ENCODE measurements at regions of chr16 and their contacts with region 1.

Region 1: DNA sequence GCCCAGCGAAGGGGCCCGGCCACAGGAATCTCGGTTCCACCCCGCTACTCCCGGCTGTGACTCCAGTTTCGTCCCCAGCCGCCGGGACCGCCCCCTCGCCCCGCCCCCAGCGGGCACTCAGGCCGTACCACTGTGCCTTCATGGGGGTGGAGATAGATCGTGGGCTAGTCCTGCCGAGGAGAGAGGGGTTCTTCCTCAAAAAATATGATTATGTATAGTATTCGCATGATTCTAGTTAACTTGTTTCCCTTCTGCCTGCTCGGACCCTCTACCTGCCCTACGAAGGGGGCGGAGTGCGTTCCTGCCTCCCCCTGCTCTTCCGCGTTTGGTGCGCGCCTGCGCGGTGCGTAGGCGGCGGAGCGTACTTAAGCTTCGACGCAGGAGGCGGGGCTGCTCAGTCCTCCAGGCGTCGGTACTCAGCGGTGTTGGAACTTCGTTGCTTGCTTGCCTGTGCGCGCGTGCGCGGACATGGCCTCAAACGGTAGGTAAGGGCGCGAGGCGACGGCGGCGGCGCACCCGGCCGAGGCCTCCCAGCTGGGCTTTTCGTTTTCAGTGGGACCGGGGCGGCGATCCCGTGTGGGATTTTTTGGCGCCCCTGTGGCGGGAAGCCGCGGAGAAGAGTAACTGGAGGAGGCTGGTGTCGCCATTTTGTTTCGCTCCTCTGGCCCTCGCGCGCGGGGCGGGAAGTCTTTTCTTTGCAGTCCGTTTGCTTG is at the start of gene FUS:
- DNase-seq: peak; percentile 78 to 98 (median 89)
- ATAC-seq: peak; percentile 64 to 79 (median 69)
- H3K4me3 ChIP-seq: peak within 1 kb of the TSS; percentile 90 to 92
- H3K4me3 Mint-ChIP-seq: peak within 1 kb of the TSS; percentile 97 to 98 (median 98)
- H3K27ac ChIP-seq: peak within 1 kb of the TSS; percentile 89
- H3K27ac Mint-ChIP-seq: peak within 1 kb of the TSS; percentile 99
- H3K4me1 ChIP-seq: peaks cover 48 to 70% of the 10 kb centered on the region in 2 experiments
- H3K4me1 Mint-ChIP-seq: peaks cover 58 to 70% (median 65%) of the 10 kb centered on the region in 3 donors
- H3K27me3 ChIP-seq: no peaks in the 10 kb centered on the region
- H3K27me3 Mint-ChIP-seq: peaks cover 0 to 2% of the 10 kb centered on the region in 2 donors
- total RNA-seq, gene FUS: 410 to 963 (median 434) TPM

Region 2: DNA sequence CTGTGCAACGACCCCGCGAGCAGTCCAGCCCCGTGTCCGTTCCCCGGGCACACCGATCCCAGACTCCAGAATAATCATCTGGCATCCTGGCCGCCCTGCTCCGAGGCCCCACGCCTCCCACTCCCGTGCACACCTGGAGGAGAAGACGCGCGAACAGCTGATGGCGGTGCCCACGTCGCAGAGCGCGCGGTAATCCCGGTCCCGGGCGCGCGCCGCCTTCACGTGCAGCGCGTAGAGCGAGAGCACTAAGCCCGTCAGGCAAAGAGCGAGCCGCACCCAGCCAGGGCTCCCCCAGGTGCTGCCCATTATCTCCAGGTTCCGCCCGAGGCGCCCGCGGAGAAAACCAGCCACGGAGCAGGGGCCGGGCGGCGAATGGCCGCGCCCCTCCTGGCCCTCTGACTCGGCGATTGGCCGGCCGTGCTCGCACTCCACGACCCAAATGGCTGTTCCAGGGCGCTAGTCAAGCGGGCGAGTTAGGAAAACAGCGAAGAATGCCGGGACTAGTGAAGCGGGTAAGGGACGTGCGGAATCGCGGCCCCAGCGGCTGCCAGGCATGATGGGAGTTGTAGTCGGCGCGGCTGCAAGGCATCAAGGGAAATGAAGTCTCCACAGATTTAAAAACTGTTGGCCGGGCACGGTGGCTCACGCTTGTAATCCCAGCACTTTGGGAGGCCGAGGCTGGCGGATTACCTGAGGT is 85.3 kb before region 1 on chr16 and contains the start of gene VKORC1:
- CTCF ChIA-PET with region 1: no interaction called
- POLR2A ChIA-PET with region 1: interaction called in 1 of 2 experiments, 10 read pairs
- DNase-seq: peak; percentile 66 to 92 (median 78)
- ATAC-seq: peak; percentile 90 to 93 (median 92)
- H3K4me3 ChIP-seq: peak within 1 kb of the TSS; percentile 86
- H3K4me3 Mint-ChIP-seq: peak within 1 kb of the TSS; percentile 91 to 99 (median 92)
- H3K27ac ChIP-seq: peak within 1 kb of the TSS; percentile 75
- H3K27ac Mint-ChIP-seq: peak within 1 kb of the TSS; percentile 86 to 94
- H3K4me1 ChIP-seq: peaks cover 5 to 30% of the 10 kb centered on the region in 2 experiments
- H3K4me1 Mint-ChIP-seq: peaks cover 22 to 32% (median 31%) of the 10 kb centered on the region in 3 donors
- H3K27me3 ChIP-seq: no peaks in the 10 kb centered on the region
- H3K27me3 Mint-ChIP-seq: no peaks in the 10 kb centered on the region
- total RNA-seq, gene VKORC1: 31.8 to 66.4 (median 56.9) TPM

Region 3: DNA sequence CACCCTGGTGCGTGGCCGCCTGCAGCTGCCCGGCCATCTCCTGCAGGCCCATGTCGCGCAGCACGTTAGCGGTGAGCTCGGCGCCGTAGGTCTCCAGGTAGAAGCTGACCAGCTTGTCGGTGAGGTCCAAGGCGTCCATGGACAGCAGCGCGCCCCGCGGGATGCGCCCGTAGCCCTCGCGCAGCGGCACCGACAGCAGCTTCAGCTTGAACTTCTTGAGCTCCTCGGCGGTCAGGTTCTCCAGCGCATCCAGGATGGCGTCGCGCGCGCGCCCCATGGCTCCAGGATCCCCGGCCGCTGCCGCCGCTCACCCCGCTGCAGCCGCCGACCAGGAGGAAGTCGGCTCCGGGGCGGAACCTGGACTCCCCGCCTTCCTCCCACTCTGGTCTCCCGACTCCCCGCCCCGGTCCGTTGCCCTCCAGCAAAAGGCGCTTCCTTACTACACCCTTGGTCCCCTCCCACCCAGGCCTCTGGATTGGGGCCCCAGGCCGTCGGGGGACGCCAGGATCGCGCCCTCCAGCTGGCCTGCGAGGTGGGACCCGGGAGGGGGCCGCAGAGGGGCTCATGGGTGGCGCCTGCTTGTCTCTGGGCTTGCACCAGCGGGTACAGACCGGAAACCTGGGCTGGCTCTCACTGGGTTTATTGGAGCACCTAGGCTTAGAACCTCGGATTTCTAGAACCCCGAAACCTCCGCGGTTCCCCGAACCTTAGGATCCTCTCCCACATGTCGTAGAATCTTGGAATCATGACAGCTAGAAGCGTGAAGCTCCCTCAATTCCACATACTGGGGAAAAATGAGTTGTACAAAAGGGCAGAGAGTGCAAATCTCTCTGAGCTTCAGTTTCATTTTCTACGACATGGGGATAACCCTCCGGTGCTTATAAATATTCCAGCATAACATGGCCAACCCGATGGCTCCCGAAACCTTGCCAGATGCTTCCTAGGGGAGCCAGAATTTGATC is 22.8 kb after region 1 on chr16 and contains the start of gene PYCARD:
- CTCF ChIA-PET with region 1: interaction called, 4 read pairs
- POLR2A ChIA-PET with region 1: interaction called, 5 to 12 read pairs
- DNase-seq: peak in 13 of 35 experiments; percentile 6 to 56 (median 30)
- ATAC-seq: peak; percentile 27 to 58 (median 38)
- H3K4me3 ChIP-seq: peak within 1 kb of the TSS; percentile 89 to 95
- H3K4me3 Mint-ChIP-seq: peak within 1 kb of the TSS; percentile 87 to 90 (median 89)
- H3K27ac ChIP-seq: peak within 1 kb of the TSS; percentile 67
- H3K27ac Mint-ChIP-seq: peak within 1 kb of the TSS; percentile 85 to 87
- H3K4me1 ChIP-seq: peaks cover 13 to 46% of the 10 kb centered on the region in 2 experiments
- H3K4me1 Mint-ChIP-seq: peaks cover 50 to 51% (median 50%) of the 10 kb centered on the region in 3 donors
- H3K27me3 ChIP-seq: peaks cover 0 to 2% of the 10 kb centered on the region in 2 experiments
- H3K27me3 Mint-ChIP-seq: no peaks in the 10 kb centered on the region
- total RNA-seq, gene PYCARD: 16.1 to 40.3 (median 33.4) TPM

Region 4: DNA sequence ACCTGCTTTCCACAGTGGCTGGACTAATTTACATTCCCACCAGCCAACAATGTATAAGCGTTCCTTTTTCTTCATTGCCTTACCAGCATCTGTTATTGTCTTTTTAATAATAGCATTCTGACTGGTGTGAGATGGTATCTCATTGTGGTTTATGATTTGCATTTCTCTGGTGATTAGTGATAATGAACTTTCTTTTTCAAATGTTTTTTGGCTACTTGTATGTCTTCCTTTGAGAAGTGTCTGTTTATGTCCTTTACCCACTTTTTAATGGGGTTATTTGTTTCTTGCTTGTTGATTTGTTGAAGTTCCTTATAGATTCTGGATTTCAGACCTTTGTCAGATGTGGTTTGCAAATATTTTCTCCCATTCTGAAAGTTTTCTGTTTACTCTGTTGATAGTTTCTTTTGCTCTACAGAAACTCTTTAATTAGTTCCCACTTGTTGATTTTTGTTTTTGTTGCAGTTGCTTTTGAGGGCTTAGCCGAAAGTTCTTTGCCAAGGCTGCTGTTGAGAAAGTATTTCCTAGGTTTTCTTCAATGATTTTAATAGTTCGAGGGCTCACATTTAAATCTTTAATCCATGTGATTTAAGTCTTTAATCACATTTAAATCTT is 106.6 kb after region 1 on chr16:
- CTCF ChIA-PET with region 1: no interaction called
- POLR2A ChIA-PET with region 1: no interaction called
- DNase-seq: no peak
- ATAC-seq: no peak
- H3K4me3 ChIP-seq: no peak overlapping the region
- H3K4me3 Mint-ChIP-seq: peak overlapping the region in 1 of 3 donors; percentile 28
- H3K27ac ChIP-seq: no peak overlapping the region
- H3K27ac Mint-ChIP-seq: no peak overlapping the region
- H3K4me1 ChIP-seq: peaks cover 0 to 7% of the 10 kb centered on the region in 2 experiments
- H3K4me1 Mint-ChIP-seq: peaks cover 0 to 21% (median 8%) of the 10 kb centered on the region in 3 donors
- H3K27me3 ChIP-seq: peaks cover 0 to 4% of the 10 kb centered on the region in 2 experiments
- H3K27me3 Mint-ChIP-seq: peaks cover 13 to 19% of the 10 kb centered on the region in 2 donors